ENCODE measurements at regions of chr20 and their contacts with region 1.

Region 1: DNA sequence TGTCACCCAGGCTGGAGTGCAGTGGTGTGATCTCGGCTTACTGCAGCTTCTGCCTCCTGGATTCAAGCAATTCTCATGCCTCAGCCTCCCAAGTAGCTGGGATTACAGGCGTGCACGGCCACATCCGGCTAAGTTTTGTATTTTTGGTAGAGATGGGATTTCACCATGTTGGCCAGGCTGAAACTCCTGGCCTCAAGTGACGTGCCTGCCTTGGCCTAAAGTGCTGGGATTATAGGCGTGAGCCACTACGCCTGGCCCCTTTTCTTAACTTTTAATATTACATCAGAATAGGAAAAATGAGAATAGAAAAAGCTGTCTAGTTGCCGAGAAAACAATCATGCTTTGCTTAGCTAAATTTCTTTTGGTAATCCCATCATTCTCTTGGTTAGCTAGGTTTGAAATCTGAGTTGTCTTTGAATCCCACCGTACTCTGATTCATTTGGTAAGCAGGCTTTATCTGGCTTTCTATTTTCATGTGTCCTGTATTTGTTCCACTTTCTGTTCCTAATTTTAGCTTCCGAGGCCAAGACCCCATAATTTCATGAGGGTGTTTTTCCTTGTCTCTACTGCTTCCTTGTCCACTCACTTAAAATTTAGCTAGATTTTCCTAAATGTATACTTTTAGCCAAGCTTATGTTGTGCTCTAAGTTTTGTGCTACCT is 83.5 kb downstream of the NCOA3 start:
- DNase-seq: no peak

Region 2: DNA sequence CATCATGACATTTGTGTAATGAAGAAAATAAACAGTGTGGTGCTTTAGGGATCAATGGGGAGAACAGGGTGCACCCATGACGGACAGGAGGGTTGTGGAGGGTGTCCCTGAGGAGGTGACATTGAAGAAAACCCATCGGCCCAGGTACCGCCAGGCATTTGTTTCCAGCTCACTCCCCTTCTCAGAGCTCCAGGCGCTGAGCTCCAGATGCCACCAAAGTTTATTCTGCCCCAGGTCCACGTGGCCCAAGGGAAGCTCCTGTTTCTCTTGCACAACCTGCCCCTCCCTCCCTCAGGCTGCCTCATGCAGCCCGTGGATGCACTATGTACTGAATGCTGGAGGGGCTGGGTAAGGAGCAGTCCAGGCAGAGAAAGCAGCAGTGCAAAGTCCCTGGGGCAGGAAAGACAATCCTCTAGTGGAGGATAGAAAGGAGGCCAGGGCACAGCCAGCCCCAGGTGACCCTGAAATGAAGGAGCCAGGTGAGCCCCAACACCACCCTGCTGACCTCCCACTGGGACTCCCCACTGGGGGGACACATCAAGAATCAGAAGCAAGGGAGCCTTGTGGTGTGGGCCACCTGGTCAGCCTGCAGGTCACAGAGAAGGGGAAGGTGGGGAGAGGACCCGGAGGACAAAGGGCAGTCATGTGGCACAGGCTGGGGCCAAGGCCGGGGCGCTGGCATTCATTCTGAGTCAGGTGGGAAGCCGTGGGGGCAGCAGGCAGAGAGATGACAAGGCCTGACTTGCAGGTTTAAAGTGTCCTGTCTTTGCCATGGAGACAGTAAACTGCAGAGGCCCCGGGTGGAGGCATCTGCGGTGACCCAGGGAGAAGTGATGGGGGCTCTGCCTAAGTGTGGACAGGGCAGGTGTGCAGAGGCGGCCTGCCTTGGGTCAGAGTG is 1012.4 kb after region 1 on chr20:
- intact Hi-C with region 1: loop called in 1 of 2 experiments (anchors 2 kb)
- DNase-seq: peak; percentile 78